HEK293 (cell line): ENCODE measurements at regions of chr2 and their contacts with region 1.

Region 1: GRCh38 chr2:237072067-237072931 is 13.4 kb upstream of the COPS8 start:
- H3K4me3 ChIP-seq: no peak overlapping the region
- H3K27ac ChIP-seq: no peak overlapping the region
- H3K4me1 ChIP-seq: no peaks in the 10 kb centered on the region
- CTCF ChIP-seq: peak; percentile 57

Region 2: GRCh38 chr2:237060534-237061312 is 11.6 kb before region 1 on chr2:
- CTCF ChIA-PET with region 1: interaction called, 11 read pairs
- POLR2A ChIA-PET with region 1: no interaction called
- H3K4me3 ChIP-seq: no peak overlapping the region
- H3K27ac ChIP-seq: no peak overlapping the region
- H3K4me1 ChIP-seq: no peaks in the 10 kb centered on the region
- CTCF ChIP-seq: peak; percentile 45; the same call in 1 of the 2 replicates

Region 3: DNA sequence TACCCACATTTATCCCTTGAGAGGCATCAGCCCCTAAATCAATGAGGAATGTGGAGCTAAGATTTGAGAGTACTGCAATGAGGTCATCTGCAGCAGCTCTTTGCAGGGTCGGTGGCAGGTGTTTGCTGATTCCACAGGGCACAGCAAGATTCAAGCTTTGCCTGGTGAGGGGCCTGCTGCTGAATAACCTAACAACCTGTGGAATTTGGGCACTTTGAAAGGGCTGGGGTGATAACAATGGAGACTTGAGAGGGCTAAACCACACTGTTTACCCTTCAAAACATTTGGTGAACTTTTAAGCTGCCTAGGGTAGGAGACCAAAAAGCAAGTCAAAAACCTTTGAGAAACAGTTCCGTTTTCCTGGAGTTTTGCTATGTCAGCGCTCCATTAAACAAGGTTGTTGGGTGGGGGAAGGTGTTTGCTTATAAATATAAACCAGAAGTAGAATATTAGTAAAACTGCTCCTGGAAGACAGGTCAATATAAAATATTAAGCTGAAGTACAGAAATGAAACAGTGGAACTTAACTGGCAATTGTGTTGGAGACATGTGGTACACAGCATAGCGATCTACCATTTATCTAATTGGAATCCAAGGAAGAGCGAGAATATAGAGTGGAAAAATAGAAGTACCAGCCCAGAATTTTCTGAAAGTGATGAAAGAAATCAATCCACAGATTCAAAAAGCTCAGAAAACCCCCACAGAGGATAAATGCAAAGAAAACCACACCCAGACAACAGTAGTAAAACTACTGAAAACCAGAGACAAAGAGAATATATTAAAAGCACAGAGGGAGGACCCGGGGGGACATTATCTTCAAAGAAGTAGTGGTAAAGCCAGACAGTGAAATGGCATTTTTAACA is 29.1 kb after region 1 on chr2:
- CTCF ChIA-PET with region 1: no interaction called
- POLR2A ChIA-PET with region 1: no interaction called
- H3K4me3 ChIP-seq: no peak overlapping the region
- H3K27ac ChIP-seq: no peak overlapping the region
- H3K4me1 ChIP-seq: no peaks in the 10 kb centered on the region
- CTCF ChIP-seq: no peak